Body of pancreas (tissue), 4 donors: ENCODE measurements at regions of chr21 and their contacts with region 1.

Region 1: DNA sequence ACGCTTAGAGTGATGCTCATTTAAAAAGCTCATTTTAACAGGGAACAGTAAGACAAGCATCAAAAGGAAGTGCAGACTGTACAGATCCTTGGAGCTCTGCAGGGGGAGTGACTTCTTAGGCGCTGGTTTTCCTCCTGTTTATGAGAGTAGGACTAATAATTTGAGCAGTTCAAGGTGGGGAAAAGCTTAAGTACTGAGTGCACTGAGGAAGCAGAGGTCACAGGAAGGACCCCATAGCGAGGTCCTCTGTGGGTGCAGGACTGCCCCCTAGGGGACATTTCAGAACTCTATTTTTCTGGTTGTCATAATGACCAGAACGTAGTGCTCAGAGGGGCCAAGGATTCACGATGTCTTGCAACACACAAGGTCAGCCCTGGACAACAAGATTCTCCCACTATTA is 112.1 kb downstream of the HLCS start:
- DNase-seq: peak in 3 of 4 donors; percentile 20 to 28 (median 23)
- ATAC-seq: peak; percentile 33
- H3K4me3 ChIP-seq: no peak overlapping the region
- H3K27ac ChIP-seq: no peak overlapping the region
- H3K4me1 ChIP-seq: peaks cover 3% of the 10 kb centered on the region
- H3K27me3 ChIP-seq: no peaks in the 10 kb centered on the region
- CTCF ChIP-seq: peak; percentile 17 to 49 (median 38)
- POLR2A ChIP-seq: no peak

Region 2: DNA sequence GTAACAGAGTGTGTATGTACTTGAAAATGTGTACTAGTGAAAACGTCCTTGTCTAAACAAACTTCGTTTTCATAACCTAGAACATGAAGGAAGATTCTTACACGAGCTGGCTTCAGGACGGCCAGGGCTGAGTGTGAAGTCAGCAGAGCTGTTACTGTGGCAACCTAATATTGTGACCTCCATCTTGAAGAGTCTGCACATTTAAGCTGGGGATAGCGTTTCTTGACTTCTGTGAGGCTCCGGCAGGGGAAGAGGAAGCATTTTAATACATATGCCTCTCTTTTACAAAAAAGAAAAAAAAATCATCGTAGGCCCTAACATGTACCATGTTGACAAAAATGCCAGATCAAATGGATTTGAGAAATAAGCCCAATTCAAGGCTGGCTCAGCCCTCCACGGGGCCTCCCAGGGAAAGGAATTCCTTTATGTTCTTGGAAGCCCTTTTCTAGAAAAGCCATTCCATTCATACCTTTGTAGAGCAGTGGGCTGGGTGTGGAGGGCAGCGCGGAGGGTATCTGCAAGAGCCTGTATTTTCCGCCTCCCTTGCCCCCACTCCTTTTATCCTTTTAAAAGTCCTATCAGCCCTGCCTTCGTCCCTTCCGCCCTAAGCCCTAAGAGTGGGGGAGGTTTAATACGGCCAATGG is 104.3 kb before region 1 on chr21:
- intact Hi-C with region 1: loop called (anchors 10 kb)
- DNase-seq: no peak
- ATAC-seq: no peak
- H3K4me3 ChIP-seq: no peak overlapping the region
- H3K27ac ChIP-seq: no peak overlapping the region
- H3K4me1 ChIP-seq: peaks cover 10% of the 10 kb centered on the region
- H3K27me3 ChIP-seq: no peaks in the 10 kb centered on the region
- CTCF ChIP-seq: no peak
- POLR2A ChIP-seq: no peak